CD8-positive, alpha-beta T cell (primary cell): ENCODE measurements at regions of chr3 and their contacts with region 1.

Region 1: GRCh38 chr3:11624161-11624560 is 19.6 kb downstream of the VGLL4 start:
- DNase-seq: peak in 5 of 9 experiments; percentile 34 to 75 (median 61)
- ATAC-seq: peak; percentile 91
- H3K4me3 ChIP-seq: no peak overlapping the region
- H3K4me3 Mint-ChIP-seq: peak overlapping the region; percentile 68
- H3K27ac ChIP-seq: peak overlapping the region in 1 of 2 experiments; percentile 15
- H3K27ac Mint-ChIP-seq: peak overlapping the region; percentile 82
- H3K4me1 ChIP-seq: peaks cover 45% of the 10 kb centered on the region
- H3K4me1 Mint-ChIP-seq: peaks cover 65% of the 10 kb centered on the region
- H3K27me3 ChIP-seq: no peaks in the 10 kb centered on the region
- H3K27me3 Mint-ChIP-seq: no peaks in the 10 kb centered on the region
- CTCF ChIP-seq: no peak

Region 2: DNA sequence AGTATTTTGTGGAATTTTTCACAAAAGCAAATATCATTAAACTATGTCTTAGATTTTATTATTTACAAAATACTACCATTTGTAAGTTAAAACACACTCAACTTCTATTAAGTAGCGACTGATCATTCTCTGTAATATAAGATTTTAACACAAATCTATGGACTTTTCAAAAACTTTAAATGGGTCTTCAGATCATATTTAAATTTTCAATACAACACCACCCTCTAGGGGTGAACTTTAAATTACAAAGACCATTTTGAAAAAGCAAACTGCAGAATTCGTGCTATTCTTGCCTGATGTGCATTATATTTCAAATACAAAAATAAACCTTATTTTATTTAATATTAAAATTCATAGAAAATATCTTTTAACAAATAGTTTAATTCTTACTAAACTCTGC is 27.7 kb after region 1 on chr3:
- CTCF ChIA-PET with region 1: interaction called, 11 read pairs
- POLR2A ChIA-PET with region 1: no interaction called
- intact Hi-C with region 1: no loop called
- DNase-seq: peak in 2 of 9 experiments; percentile 56 to 67
- ATAC-seq: no peak
- H3K4me3 ChIP-seq: no peak overlapping the region
- H3K4me3 Mint-ChIP-seq: no peak overlapping the region
- H3K27ac ChIP-seq: no peak overlapping the region
- H3K27ac Mint-ChIP-seq: no peak overlapping the region
- H3K4me1 ChIP-seq: peaks cover 11% of the 10 kb centered on the region
- H3K4me1 Mint-ChIP-seq: peaks cover 13% of the 10 kb centered on the region
- H3K27me3 ChIP-seq: no peaks in the 10 kb centered on the region
- H3K27me3 Mint-ChIP-seq: no peaks in the 10 kb centered on the region
- CTCF ChIP-seq: peak; percentile 83

Region 3: GRCh38 chr3:12004741-12005513 is 380.8 kb after region 1 on chr3:
- CTCF ChIA-PET with region 1: no interaction called
- POLR2A ChIA-PET with region 1: no interaction called
- intact Hi-C with region 1: no loop called
- DNase-seq: no peak
- ATAC-seq: no peak
- H3K4me3 ChIP-seq: no peak overlapping the region
- H3K4me3 Mint-ChIP-seq: peak overlapping the region; percentile 30
- H3K27ac ChIP-seq: no peak overlapping the region
- H3K27ac Mint-ChIP-seq: no peak overlapping the region
- H3K4me1 ChIP-seq: no peaks in the 10 kb centered on the region
- H3K4me1 Mint-ChIP-seq: peaks cover 7% of the 10 kb centered on the region
- H3K27me3 ChIP-seq: peaks cover 9 to 19% of the 10 kb centered on the region in 2 experiments
- H3K27me3 Mint-ChIP-seq: peaks cover 41% of the 10 kb centered on the region
- CTCF ChIP-seq: no peak